HEK293 (cell line): ENCODE measurements at regions of chr1 and their contacts with region 1.

Region 1: GRCh38 chr1:26932531-26932930 is 11.0 kb downstream of the NUDC start:
- H3K4me3 ChIP-seq: no peak overlapping the region
- H3K27ac ChIP-seq: no peak overlapping the region
- H3K4me1 ChIP-seq: no peaks in the 10 kb centered on the region
- CTCF ChIP-seq: no peak

Region 2: GRCh38 chr1:26754086-26754874 is 178.3 kb before region 1 on chr1:
- CTCF ChIA-PET with region 1: no interaction called
- POLR2A ChIA-PET with region 1: no interaction called
- H3K4me3 ChIP-seq: no peak overlapping the region
- H3K27ac ChIP-seq: no peak overlapping the region
- H3K4me1 ChIP-seq: no peaks in the 10 kb centered on the region
- CTCF ChIP-seq: no peak

Region 3: DNA sequence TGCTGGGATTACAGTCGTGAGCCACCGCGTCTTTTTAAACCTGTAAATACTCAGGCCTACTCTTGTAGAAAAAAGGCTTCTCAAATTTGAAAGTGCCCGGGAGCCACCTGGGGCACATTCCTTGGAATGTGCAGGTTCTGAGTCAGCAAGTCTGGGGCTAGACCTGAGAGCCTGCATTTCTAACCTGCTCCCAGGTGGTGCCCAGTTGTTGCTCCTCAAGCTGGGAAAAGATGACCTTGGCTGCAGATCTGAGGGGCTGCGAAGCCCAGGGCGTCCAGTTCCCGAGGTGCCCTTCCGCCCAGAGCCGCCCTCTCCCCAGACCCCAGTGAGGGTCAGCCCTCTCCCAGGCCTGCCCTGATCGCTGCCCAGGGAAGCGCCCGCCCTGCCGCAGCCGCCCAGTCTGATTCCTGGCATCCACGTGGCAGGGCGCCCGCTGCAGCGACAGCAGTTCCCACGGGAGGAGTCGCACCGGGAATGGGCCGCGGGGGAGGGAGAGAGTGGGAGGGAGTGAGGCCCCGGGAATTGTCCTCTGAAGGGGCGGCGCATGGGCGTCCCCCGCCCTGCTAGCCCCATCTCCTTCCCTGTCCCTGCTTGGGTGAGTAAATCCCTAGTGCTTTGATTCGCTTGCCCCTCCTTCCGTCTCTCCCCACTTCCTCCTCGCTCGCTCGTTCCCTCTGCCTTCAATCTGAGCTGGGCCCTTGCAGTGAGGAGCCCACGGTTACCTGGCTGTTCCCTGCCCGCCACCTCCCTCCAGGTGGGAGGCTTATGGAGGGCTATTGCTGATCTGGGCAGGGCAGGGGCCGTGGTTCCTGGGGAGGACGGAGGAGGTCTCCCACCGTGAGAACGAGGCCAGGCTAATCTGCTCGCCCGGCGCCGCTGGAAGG is 98.9 kb after region 1 on chr1:
- CTCF ChIA-PET with region 1: no interaction called
- POLR2A ChIA-PET with region 1: no interaction called
- H3K4me3 ChIP-seq: no peak overlapping the region
- H3K27ac ChIP-seq: no peak overlapping the region
- H3K4me1 ChIP-seq: no peaks in the 10 kb centered on the region
- CTCF ChIP-seq: no peak

Region 4: DNA sequence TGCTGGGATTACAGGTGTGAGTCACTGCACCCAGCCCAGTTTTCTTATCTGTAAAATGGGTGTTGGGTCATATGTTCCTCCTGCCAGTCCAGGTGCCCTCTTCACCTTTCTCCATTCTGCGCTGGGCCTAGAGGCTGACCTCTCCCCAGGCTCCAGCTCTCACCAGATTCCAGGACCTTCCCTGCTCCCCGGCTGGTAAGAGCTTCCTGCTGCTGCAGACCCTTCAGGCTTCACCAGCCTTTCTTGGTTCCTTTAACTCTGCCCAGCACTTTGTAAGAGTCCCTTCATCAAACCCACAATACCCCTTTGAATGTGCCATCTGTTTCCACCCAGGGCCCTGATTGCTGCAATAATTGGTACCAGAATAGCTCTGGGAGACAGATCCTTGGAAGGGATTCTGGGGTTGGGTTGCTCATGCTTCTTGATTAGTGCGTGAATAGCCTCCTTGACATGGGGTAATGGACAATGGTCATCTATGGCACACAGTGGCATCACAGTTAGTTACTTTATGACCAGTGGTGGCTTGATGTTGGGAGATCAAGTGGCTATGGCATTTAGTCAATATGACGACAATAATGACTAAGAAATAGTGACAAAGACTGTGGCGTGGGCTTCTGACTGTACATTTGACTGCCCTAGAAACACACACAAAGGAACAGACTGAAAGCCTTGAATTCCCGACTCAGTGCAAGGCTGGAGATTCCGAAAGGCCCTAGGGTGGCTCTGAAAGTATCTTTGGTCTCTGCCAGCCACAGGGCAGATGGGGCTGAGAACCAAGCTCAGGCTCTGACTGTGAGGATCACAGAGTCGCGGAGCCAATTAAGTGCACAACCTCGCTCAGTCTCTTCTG is 155.1 kb after region 1 on chr1:
- CTCF ChIA-PET with region 1: no interaction called
- POLR2A ChIA-PET with region 1: interaction called, 13 read pairs
- H3K4me3 ChIP-seq: no peak overlapping the region
- H3K27ac ChIP-seq: no peak overlapping the region
- H3K4me1 ChIP-seq: no peaks in the 10 kb centered on the region
- CTCF ChIP-seq: no peak